Mammary epithelial cell (primary cell): ENCODE measurements at regions of chr9 and their contacts with region 1.

Region 1: GRCh38 chr9:131826968-131827525 is 87.2 kb upstream of the RAPGEF1 start:
- DNase-seq: peak; percentile 73
- H3K4me3 ChIP-seq: no peak overlapping the region
- H3K27ac ChIP-seq: no peak overlapping the region
- H3K4me1 ChIP-seq: peaks cover 15% of the 10 kb centered on the region
- H3K27me3 ChIP-seq: peaks cover 14% of the 10 kb centered on the region
- CTCF ChIP-seq: no peak

Region 2: DNA sequence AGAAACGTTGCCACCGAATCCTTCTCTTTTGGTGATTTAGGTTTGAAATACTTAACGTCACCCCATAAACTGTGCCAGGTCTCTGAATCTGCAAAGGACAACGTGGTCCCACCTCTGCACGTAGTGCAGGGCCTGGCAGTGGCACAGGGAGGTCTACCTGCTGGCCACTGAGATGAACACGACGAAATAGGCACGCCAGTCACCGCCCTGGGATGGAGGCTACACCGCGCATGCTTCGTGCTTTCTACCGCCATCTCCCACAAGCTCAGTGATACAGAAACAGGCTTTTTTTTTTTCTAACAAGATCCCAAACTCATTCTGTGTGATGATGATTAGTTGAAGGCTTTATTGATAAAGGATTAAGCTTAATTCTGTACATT is 52.9 kb after region 1 on chr9:
- CTCF ChIA-PET with region 1: no interaction called
- dilution Hi-C with region 1: loop called (anchors 5 kb)
- in situ Hi-C with region 1: no loop called
- intact Hi-C with region 1: no loop called
- DNase-seq: no peak
- H3K4me3 ChIP-seq: no peak overlapping the region
- H3K27ac ChIP-seq: no peak overlapping the region
- H3K4me1 ChIP-seq: no peaks in the 10 kb centered on the region
- H3K27me3 ChIP-seq: no peaks in the 10 kb centered on the region
- CTCF ChIP-seq: no peak

Region 3: DNA sequence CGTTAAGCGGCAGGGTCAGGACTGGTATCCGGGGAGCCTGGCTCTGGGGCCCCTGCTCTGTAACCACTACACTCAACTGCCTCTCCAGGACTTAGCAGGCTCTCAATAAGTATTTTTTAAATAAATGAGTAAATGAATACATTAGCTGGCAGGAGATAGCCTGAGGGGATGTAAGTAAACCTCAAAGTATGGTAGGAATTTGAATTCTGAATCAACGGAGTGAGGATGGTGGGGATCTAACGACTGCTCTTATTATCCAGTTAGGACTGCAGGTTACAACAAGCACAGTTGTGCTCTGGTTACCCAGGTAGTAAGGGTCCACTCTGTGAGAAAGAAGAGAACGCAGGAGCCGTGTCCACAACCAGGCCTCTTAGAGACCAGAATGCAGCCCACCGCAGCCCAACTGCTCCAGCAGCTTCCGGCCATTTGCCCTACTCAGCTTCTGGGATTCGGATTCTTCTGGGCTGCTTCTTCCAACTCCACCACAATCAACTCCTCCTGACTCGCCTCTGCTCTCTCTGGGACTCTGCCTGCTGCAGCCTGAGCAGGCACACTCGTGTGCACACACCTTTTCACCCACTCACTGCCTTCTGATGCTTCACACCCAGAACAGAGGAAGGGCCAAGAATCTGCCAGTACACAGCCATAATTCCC is 200.0 kb after region 1 on chr9:
- CTCF ChIA-PET with region 1: no interaction called
- dilution Hi-C with region 1: no loop called
- in situ Hi-C with region 1: no loop called
- intact Hi-C with region 1: no loop called
- DNase-seq: peak; percentile 91
- H3K4me3 ChIP-seq: peak overlapping the region in 1 of 3 experiments; percentile 6
- H3K27ac ChIP-seq: peak overlapping the region; percentile 61
- H3K4me1 ChIP-seq: peaks cover 49% of the 10 kb centered on the region
- H3K27me3 ChIP-seq: no peaks in the 10 kb centered on the region
- CTCF ChIP-seq: no peak

Region 4: GRCh38 chr9:132094314-132094791 is 267.3 kb after region 1 on chr9:
- CTCF ChIA-PET with region 1: no interaction called
- dilution Hi-C with region 1: no loop called
- in situ Hi-C with region 1: no loop called
- intact Hi-C with region 1: loop called (anchors 10 kb)
- DNase-seq: peak; percentile 77
- H3K4me3 ChIP-seq: no peak overlapping the region
- H3K27ac ChIP-seq: no peak overlapping the region
- H3K4me1 ChIP-seq: peaks cover 17% of the 10 kb centered on the region
- H3K27me3 ChIP-seq: no peaks in the 10 kb centered on the region
- CTCF ChIP-seq: no peak